Heart left ventricle (tissue), 16 donors: ENCODE measurements at regions of chr6 and their contacts with region 1.

Region 1: GRCh38 chr6:156686995-156687788 is 90.0 kb upstream of the ARID1B start:
- DNase-seq: peak; percentile 92 to 95 (median 94)
- ATAC-seq: peak; percentile 96 to 98 (median 96)
- H3K4me3 ChIP-seq: peak overlapping the region; percentile 36 to 91 (median 76)
- H3K27ac ChIP-seq: peak overlapping the region; percentile 91 to 100 (median 98)
- H3K4me1 ChIP-seq: peaks cover 0 to 18% (median 11%) of the 10 kb centered on the region in 12 donors
- H3K27me3 ChIP-seq: no peaks in the 10 kb centered on the region
- CTCF ChIP-seq: no peak
- POLR2A ChIP-seq: peak in 1 of 2 donors; percentile 80

Region 2: GRCh38 chr6:156848533-156848932 is 161.3 kb after region 1 on chr6:
- intact Hi-C with region 1: loop called in 1 of 10 experiments (anchors 10 kb)
- DNase-seq: peak; percentile 85 to 91 (median 88)
- ATAC-seq: peak; percentile 82 to 91 (median 84)
- H3K4me3 ChIP-seq: peak overlapping the region in 4 of 12 donors; percentile 1 to 15 (median 8)
- H3K27ac ChIP-seq: peak overlapping the region; percentile 7 to 77 (median 64)
- H3K4me1 ChIP-seq: peaks cover 16 to 100% (median 90%) of the 10 kb centered on the region in 12 donors
- H3K27me3 ChIP-seq: no peaks in the 10 kb centered on the region
- CTCF ChIP-seq: no peak
- POLR2A ChIP-seq: no peak

Region 3: DNA sequence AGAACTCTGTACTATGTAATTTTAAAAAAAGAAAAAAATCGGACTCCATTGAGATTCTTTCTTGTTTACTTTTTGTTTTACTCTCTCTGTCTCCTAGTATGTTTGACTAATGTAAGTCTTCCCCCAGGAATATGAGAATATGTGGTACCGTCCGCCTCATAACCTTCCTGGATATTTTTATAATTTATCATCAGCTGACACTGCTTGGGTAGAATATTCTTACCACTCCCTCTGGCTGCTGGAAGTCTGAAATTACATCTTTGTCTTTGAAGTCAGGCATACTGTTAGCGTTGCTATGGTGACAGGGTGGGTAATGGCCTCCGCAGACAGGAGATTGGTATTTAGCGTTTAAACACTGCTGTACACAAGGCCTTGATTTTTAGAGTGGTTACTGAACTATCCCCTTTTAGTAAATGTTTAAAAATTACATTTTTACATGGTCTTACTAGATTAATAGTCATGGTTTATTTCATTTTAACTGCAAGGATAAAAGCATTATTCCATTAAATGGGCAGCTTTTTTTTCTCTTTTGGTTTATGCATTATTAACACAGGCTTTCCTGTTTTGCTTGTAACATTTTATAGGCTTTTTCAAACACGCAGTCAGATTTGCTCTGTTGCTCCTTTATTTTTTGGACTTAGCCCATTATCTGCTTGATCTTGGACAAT is 266.4 kb after region 1 on chr6:
- intact Hi-C with region 1: loop called in 4 of 10 experiments (anchors 5 to 10 kb)
- DNase-seq: peak in 2 of 5 donors; percentile 47 to 62
- ATAC-seq: peak; percentile 57 to 80 (median 71)
- H3K4me3 ChIP-seq: peak overlapping the region in 7 of 12 donors; percentile 6 to 39 (median 29)
- H3K27ac ChIP-seq: peak overlapping the region in 11 of 12 donors; percentile 27 to 76 (median 53)
- H3K4me1 ChIP-seq: peaks cover 13 to 88% (median 66%) of the 10 kb centered on the region in 12 donors
- H3K27me3 ChIP-seq: no peaks in the 10 kb centered on the region
- CTCF ChIP-seq: peak in 10 of 12 donors; percentile 24 to 66 (median 50)
- POLR2A ChIP-seq: no peak

Region 4: DNA sequence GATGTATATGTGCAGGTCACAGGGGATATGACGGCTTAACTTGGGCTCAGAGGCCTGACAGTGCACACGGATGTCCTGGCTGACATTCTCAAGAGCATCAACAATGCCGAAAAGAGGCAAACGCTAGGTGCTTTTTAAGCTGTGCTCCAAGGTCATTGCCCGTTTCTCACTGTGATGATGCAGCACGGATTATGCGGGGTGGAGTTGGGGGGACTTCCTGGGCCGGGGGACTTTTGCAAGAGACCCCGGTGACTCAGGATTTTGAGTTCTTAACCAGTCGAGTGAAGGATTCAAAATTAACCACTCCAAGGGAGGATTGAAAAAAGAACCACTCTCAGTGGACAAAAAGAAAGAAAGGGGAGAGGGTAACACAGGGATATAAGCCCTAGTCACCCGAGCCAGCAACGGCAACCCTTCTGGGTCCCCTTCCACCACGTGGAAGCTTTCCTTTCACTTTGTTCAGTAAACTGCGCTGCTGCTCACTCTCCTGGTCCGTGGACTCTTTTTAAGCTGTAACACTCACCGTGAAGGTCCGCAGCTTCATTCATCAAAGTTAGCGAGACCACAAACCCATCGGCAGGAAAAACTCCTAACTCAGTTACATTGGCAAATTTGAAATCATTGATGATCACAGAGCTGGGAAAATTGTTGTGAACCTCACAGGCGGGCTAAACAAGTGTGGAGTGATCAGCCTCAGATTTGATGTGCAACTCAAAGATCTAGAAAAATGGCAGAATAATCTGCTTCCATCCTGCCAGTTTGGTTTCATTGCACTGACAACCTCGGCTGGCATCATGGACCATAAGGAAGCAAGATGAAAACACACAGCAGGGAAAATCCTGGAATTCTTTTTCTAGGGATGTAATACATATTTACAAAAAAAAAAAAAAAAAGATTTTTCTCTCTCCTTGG is 289.3 kb after region 1 on chr6:
- intact Hi-C with region 1: no loop called
- DNase-seq: no peak
- ATAC-seq: peak in 2 of 4 donors; percentile 28 to 30
- H3K4me3 ChIP-seq: peak overlapping the region in 10 of 12 donors; percentile 10 to 47 (median 30)
- H3K27ac ChIP-seq: peak overlapping the region in 2 of 12 donors; percentile 13 to 40
- H3K4me1 ChIP-seq: peaks cover 4 to 83% (median 62%) of the 10 kb centered on the region in 12 donors
- H3K27me3 ChIP-seq: no peaks in the 10 kb centered on the region
- CTCF ChIP-seq: no peak
- POLR2A ChIP-seq: no peak

Region 5: GRCh38 chr6:157184202-157185020 is 497.2 kb after region 1 on chr6:
- intact Hi-C with region 1: loop called in 1 of 10 experiments (anchors 10 kb)
- DNase-seq: peak; percentile 58 to 79 (median 73)
- ATAC-seq: peak; percentile 23 to 81 (median 76)
- H3K4me3 ChIP-seq: peak overlapping the region in 2 of 12 donors; percentile 35 to 41
- H3K27ac ChIP-seq: no peak overlapping the region
- H3K4me1 ChIP-seq: peaks cover 0 to 38% (median 14%) of the 10 kb centered on the region in 12 donors
- H3K27me3 ChIP-seq: no peaks in the 10 kb centered on the region
- CTCF ChIP-seq: peak; percentile 69 to 95 (median 90)
- POLR2A ChIP-seq: no peak